CD8-positive, alpha-beta memory T cell (primary cell): ENCODE measurements at regions of chr11 and their contacts with region 1.

Region 1: GRCh38 chr11:6667733-6668374 is 12.2 kb upstream of the DCHS1 start:
- DNase-seq: peak in 2 of 5 donors; percentile 41 to 47
- H3K4me3 ChIP-seq: no peak overlapping the region
- H3K4me3 Mint-ChIP-seq: peak overlapping the region in 1 of 7 donors; percentile 38
- H3K27ac ChIP-seq: no peak overlapping the region
- H3K27ac Mint-ChIP-seq: peak overlapping the region; percentile 6 to 86 (median 56)
- H3K4me1 ChIP-seq: peaks cover 45% of the 10 kb centered on the region
- H3K4me1 Mint-ChIP-seq: peaks cover 45 to 66% (median 65%) of the 10 kb centered on the region in 3 donors
- H3K27me3 ChIP-seq: no peaks in the 10 kb centered on the region
- H3K27me3 Mint-ChIP-seq: no peaks in the 10 kb centered on the region

Region 2: DNA sequence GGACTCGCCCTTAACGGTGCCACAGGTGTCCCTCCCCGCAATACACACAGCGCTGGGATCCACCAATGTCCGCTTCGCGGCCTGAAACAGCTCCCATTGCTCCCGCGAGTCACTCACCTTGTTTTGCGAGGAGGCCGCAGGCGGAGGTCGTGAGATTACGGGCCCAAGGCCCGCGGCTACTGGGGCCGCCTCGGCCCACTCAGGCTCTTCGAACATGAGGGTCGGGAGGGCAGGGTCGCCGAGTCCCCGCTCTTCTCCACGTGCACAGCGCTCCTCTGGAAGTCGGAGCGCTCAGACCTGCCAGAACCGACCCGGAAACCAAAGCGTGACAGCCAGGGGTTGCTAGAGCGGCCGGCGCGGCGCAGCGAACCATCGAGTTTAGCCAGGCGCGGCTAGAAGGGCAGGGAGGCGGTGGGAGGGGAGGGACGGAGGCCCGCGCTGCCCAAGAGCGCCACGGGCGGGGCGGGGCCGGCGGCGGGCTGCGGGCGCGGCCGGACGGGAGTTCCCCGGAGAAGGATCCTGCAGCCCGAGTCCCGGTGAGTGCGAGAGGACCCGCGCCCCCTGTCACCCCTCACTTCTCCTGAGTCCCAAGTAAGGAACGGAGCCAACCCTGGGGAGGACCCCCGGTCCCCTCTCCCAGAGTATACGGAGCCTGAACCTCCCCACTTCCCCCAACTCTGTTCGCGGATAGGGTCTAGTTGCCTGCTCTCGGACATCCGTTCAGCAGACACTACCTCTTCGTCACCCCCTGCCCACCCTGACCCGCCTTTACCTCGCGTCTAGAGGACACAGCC is 64.4 kb before region 1 on chr11 and contains the starts of genes ILK and RRP8:
- CTCF ChIA-PET with region 1: interaction called, 34 read pairs
- POLR2A ChIA-PET with region 1: interaction called, 7 read pairs
- DNase-seq: peak; percentile 80 to 91 (median 81)
- H3K4me3 ChIP-seq: peak within 1 kb of the TSS; percentile 86
- H3K4me3 Mint-ChIP-seq: no peak within 1 kb of the TSS
- H3K27ac ChIP-seq: peak within 1 kb of the TSS; percentile 91
- H3K27ac Mint-ChIP-seq: no peak within 1 kb of the TSS
- H3K4me1 ChIP-seq: peaks cover 57% of the 10 kb centered on the region
- H3K4me1 Mint-ChIP-seq: peaks cover 14 to 31% (median 18%) of the 10 kb centered on the region in 3 donors
- H3K27me3 ChIP-seq: no peaks in the 10 kb centered on the region
- H3K27me3 Mint-ChIP-seq: no peaks in the 10 kb centered on the region
- total RNA-seq, gene ILK: 90.1 to 92.6 TPM
- total RNA-seq, gene RRP8: 42.0 to 44.7 TPM

Region 3: GRCh38 chr11:6619004-6619745 is 48.7 kb before region 1 on chr11 and contains the start of gene TPP1:
- CTCF ChIA-PET with region 1: interaction called, 28 read pairs
- POLR2A ChIA-PET with region 1: interaction called, 7 read pairs
- DNase-seq: peak; percentile 83 to 95 (median 91)
- H3K4me3 ChIP-seq: peak within 1 kb of the TSS; percentile 91
- H3K4me3 Mint-ChIP-seq: no peak within 1 kb of the TSS
- H3K27ac ChIP-seq: peak within 1 kb of the TSS; percentile 88
- H3K27ac Mint-ChIP-seq: no peak within 1 kb of the TSS
- H3K4me1 ChIP-seq: peaks cover 19% of the 10 kb centered on the region
- H3K4me1 Mint-ChIP-seq: peaks cover 9 to 13% (median 13%) of the 10 kb centered on the region in 3 donors
- H3K27me3 ChIP-seq: no peaks in the 10 kb centered on the region
- H3K27me3 Mint-ChIP-seq: peaks cover 0 to 1% of the 10 kb centered on the region in 2 donors
- total RNA-seq, gene TPP1: 57.2 to 61.6 TPM

Region 4: DNA sequence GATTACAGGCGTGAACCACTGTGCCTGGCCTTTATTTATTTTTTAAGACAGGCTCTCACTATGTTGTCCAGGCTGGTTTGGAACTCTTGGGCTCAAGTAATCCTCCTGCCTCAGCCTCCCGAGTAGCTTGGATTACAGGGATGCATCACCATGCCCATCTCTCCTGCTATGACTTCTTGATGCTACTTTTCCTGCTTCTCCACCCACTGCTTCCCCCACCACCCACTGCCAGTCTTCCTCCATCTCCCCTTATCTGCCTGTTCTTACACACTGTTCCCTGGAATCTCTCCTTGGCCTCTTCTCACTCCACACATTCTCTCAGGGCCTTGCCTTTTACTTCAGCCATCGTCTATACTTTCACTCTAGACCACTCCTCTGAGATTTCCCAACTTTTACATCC is 31.4 kb before region 1 on chr11:
- CTCF ChIA-PET with region 1: no interaction called
- POLR2A ChIA-PET with region 1: no interaction called
- DNase-seq: no peak
- H3K4me3 ChIP-seq: no peak overlapping the region
- H3K4me3 Mint-ChIP-seq: no peak overlapping the region
- H3K27ac ChIP-seq: no peak overlapping the region
- H3K27ac Mint-ChIP-seq: no peak overlapping the region
- H3K4me1 ChIP-seq: no peaks in the 10 kb centered on the region
- H3K4me1 Mint-ChIP-seq: no peaks in the 10 kb centered on the region
- H3K27me3 ChIP-seq: no peaks in the 10 kb centered on the region
- H3K27me3 Mint-ChIP-seq: peaks cover 0 to 2% of the 10 kb centered on the region in 2 donors

Region 5: DNA sequence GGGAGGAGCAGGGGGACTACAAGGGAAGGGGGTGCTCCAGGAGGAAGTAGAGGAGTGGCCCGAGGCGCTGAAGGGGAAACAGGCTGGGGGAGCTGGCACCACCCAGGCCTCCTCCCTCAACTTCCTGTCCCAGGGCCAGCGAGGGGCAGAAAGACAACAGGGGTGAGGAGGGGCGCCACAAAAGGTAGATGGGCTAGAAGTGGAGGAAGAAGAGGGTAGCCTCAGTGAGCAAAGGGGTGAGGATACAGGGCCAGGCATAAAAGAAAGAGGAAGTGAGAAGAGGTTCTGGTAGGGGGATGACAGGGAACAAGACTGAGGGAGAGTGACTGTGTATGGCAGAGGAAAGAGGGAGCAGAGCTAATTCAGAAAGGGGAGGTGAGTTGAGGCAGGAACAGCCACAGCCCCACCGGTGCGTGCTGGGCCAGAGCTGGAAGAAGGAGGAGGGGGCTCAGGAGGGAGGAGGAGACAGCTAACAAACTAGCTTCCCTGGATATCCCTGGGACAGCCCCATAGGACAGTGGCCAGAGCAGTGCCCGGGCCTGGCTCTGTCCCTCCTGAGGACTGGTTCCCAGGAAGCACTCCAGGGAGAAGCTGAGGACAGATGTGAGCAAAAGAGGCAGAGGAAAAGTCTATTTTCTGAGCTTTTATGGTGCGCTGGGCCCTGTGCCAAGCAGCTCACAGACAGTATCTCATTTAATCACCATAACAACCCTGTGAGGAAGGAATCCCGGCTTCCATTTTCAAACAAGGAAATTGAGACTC is 20.8 kb before region 1 on chr11:
- CTCF ChIA-PET with region 1: interaction called, 14 read pairs
- POLR2A ChIA-PET with region 1: no interaction called
- DNase-seq: peak in 3 of 5 donors; percentile 22 to 64 (median 41)
- H3K4me3 ChIP-seq: peak overlapping the region; percentile 40
- H3K4me3 Mint-ChIP-seq: no peak overlapping the region
- H3K27ac ChIP-seq: no peak overlapping the region
- H3K27ac Mint-ChIP-seq: no peak overlapping the region
- H3K4me1 ChIP-seq: peaks cover 65% of the 10 kb centered on the region
- H3K4me1 Mint-ChIP-seq: no peaks in the 10 kb centered on the region
- H3K27me3 ChIP-seq: no peaks in the 10 kb centered on the region
- H3K27me3 Mint-ChIP-seq: peaks cover 0 to 1% of the 10 kb centered on the region in 2 donors

Region 6: DNA sequence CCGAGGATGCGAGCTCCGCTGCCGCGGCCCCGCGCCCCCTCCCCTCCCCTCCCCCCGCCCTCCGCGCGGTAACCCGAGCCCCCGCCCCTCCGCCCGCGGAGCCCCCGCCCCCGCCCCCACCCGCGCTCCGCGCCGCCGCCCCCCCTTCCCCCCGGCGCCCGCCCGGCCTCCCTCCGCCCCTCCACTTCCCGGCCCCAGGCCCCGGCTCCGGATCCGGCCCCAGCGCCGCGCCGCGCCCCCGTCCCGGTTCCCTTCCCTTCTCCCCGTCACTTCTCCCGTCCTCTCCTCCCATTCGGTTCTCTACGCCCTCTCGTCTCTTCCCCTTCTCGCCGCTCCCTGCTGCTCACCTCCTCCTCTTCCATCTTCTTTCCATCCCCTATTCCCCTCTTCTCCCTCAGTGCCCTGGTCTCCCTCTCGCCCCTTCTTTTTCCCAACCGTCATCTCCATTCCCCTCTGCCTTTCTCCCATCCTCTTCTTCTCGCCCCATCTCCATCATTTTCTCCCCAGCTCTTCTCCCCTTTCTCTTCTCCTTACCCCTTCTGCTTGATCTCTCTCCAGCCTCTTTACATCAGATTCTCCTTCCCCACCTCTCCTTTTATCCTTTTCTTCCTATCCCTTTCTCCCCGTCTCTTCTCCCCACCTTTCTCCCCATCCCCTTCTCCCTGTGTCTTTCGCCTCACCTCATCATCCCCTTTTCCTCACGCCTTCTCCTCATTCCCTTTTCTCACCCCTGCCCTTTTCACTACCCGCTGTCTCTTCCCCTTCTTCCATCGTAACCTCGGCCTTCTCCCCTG is 11.9 kb before region 1 on chr11 and contains the start of gene DCHS1:
- CTCF ChIA-PET with region 1: interaction called, 11 read pairs
- POLR2A ChIA-PET with region 1: interaction called, 12 read pairs
- DNase-seq: peak in 3 of 5 donors; percentile 6 to 30 (median 25)
- H3K4me3 ChIP-seq: peak within 1 kb of the TSS; percentile 40
- H3K4me3 Mint-ChIP-seq: peak within 1 kb of the TSS; percentile 46 to 86 (median 72)
- H3K27ac ChIP-seq: no peak within 1 kb of the TSS
- H3K27ac Mint-ChIP-seq: peak within 1 kb of the TSS in 6 of 8 donors; percentile 1 to 82 (median 28)
- H3K4me1 ChIP-seq: peaks cover 27% of the 10 kb centered on the region
- H3K4me1 Mint-ChIP-seq: peaks cover 0 to 3% (median 2%) of the 10 kb centered on the region in 3 donors
- H3K27me3 ChIP-seq: no peaks in the 10 kb centered on the region
- H3K27me3 Mint-ChIP-seq: peaks cover 0 to 2% of the 10 kb centered on the region in 2 donors
- total RNA-seq, gene DCHS1: 0.89 to 0.96 TPM

Region 7: GRCh38 chr11:6855971-6856541 is 188.2 kb after region 1 on chr11:
- CTCF ChIA-PET with region 1: no interaction called
- POLR2A ChIA-PET with region 1: no interaction called
- DNase-seq: no peak
- H3K4me3 ChIP-seq: no peak overlapping the region
- H3K4me3 Mint-ChIP-seq: no peak overlapping the region
- H3K27ac ChIP-seq: no peak overlapping the region
- H3K27ac Mint-ChIP-seq: no peak overlapping the region
- H3K4me1 ChIP-seq: no peaks in the 10 kb centered on the region
- H3K4me1 Mint-ChIP-seq: no peaks in the 10 kb centered on the region
- H3K27me3 ChIP-seq: no peaks in the 10 kb centered on the region
- H3K27me3 Mint-ChIP-seq: peaks cover 7 to 9% of the 10 kb centered on the region in 2 donors